OCI-LY7 (cell line): ENCODE measurements at regions of chr17 and their contacts with region 1.

Region 1: GRCh38 chr17:79393358-79394202 is 217.3 kb downstream of the RBFOX3 start:
- DNase-seq: peak; percentile 73
- H3K4me3 ChIP-seq: no peak overlapping the region
- H3K27ac ChIP-seq: no peak overlapping the region
- H3K4me1 ChIP-seq: no peaks in the 10 kb centered on the region
- CTCF ChIP-seq: peak; percentile 99

Region 2: GRCh38 chr17:79087428-79088143 is 306.0 kb before region 1 on chr17:
- CTCF ChIA-PET with region 1: interaction called, 4 read pairs
- POLR2A ChIA-PET with region 1: no interaction called
- intact Hi-C with region 1: loop called (anchors 1 kb)
- DNase-seq: peak; percentile 74
- H3K4me3 ChIP-seq: no peak overlapping the region
- H3K27ac ChIP-seq: no peak overlapping the region
- H3K4me1 ChIP-seq: no peaks in the 10 kb centered on the region
- CTCF ChIP-seq: peak; percentile 97

Region 3: GRCh38 chr17:79188048-79188447 is 205.5 kb before region 1 on chr17:
- CTCF ChIA-PET with region 1: interaction called, 6 read pairs
- POLR2A ChIA-PET with region 1: no interaction called
- intact Hi-C with region 1: loop called (anchors 1 kb)
- DNase-seq: peak; percentile 61
- H3K4me3 ChIP-seq: no peak overlapping the region
- H3K27ac ChIP-seq: no peak overlapping the region
- H3K4me1 ChIP-seq: no peaks in the 10 kb centered on the region
- CTCF ChIP-seq: peak; percentile 84

Region 4: DNA sequence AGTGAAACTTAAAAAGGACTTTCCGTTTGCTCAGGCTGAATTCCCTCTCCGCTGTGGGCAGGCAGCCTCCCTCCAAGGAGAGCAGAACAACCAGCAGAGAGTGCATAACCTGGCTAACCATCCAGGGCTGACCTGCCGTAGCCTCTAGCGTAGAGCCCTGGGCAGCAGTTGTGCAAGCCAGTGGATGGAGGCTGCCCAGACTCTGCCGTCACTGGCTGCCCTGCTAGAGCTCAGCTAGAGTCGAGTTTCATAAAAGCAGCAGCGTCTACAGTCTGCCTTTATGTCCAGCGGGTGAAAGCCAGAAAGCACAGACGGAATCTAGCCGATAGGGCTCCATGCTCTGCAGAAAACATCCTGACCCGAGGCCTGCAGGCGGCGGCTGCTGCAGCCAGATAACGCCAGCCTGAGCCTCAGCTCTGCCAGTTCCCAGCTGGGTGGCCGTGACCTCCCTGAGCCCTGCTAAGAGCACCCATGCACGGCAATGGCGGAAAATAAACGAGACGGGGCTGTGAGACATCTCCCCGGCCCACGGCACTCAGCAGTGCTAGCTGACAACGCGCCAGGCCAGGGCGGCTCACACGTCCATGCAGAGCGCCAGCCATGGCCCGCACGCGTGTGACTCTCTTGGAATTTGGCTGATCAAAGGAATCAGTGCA is 87.7 kb before region 1 on chr17:
- CTCF ChIA-PET with region 1: interaction called, 3 read pairs
- POLR2A ChIA-PET with region 1: no interaction called
- intact Hi-C with region 1: loop called (anchors 1 kb)
- DNase-seq: peak; percentile 46
- H3K4me3 ChIP-seq: peak overlapping the region; percentile 28
- H3K27ac ChIP-seq: peak overlapping the region; percentile 78
- H3K4me1 ChIP-seq: peaks cover 79% of the 10 kb centered on the region
- CTCF ChIP-seq: no peak

Region 5: DNA sequence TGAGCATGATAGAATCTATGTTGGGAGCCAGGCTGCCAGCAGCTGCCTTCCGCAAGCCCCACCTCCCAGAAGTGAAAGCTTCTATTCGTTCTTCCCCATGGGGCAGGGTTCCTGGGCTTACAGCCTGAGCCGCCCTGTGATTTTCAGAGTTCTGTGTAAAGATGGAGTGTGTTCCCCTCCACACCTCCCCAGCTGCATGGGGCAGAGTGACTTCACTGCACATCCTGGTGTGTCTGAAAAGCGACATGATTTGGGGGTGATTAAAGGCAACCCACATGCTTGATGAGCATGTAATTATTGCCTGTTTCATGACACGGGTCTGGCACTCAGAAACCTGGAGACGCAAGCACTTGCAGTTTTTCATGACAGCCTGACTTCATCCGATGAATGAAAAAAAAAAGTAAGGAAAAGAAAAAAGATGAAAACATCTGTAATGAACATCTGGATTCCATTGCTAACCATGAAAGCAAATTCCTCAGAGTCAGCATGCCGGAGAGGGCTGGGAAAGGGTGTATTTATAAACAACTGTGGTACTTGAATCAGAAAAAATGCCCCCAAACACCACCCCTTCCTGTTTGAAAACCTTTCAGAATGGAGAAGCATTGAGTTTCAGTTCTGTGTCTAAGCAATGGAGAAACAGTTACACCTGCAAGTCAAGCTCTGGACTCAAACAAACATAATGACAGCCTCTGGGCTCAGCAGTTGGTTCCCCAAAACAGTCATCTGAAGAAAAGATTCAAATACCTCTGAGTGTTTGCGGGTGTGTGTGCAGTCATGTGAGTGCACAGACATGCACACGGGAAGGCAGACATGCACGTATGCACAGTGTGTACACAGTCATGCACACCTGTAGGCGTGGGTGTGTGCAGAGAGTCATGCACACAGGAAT is 53.0 kb before region 1 on chr17:
- CTCF ChIA-PET with region 1: no interaction called
- POLR2A ChIA-PET with region 1: no interaction called
- intact Hi-C with region 1: loop called (anchors 2 kb)
- DNase-seq: peak; percentile 96
- H3K4me3 ChIP-seq: peak overlapping the region; percentile 61
- H3K27ac ChIP-seq: peak overlapping the region; percentile 98
- H3K4me1 ChIP-seq: peaks cover 58% of the 10 kb centered on the region
- CTCF ChIP-seq: no peak